Activated CD8-positive, alpha-beta T cell treated with anti-CD3 and anti-CD28 coated beads, Interleukin-2, amount 10 ng/mL, durations not matched to agents 7 days and 5 days (primary cell): ENCODE measurements at regions of chr9 and their contacts with region 1.

Region 1: GRCh38 chr9:7053903-7054302 is 296.1 kb downstream of the KDM4C start:
- DNase-seq: no peak
- ATAC-seq: no peak
- H3K4me3 Mint-ChIP-seq: no peak overlapping the region
- H3K27ac Mint-ChIP-seq: no peak overlapping the region
- H3K4me1 Mint-ChIP-seq: peaks cover 2% of the 10 kb centered on the region
- H3K27me3 Mint-ChIP-seq: no peaks in the 10 kb centered on the region

Region 2: DNA sequence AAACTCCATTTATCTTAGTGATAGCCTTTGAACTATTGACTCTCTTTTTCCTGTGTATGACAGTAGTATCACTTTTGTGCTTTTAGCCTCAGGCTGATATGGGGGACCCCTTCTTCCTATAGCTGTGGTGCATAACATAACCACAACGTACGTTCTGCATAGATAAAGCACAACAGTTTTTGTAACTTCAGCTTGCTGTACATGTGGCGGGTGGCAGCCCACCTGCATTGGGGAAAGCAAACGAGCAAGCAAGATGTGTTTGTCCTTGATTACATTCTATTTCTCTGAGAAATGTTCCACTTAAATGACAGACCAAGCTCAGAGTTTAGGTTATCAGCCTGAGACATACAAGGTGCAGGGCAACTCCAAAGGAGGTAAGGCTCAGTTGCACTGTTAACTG is 13.3 kb after region 1 on chr9:
- CTCF ChIA-PET with region 1: no interaction called
- POLR2A ChIA-PET with region 1: no interaction called
- DNase-seq: no peak
- ATAC-seq: no peak
- H3K4me3 Mint-ChIP-seq: no peak overlapping the region
- H3K27ac Mint-ChIP-seq: no peak overlapping the region
- H3K4me1 Mint-ChIP-seq: peaks cover 4% of the 10 kb centered on the region
- H3K27me3 Mint-ChIP-seq: no peaks in the 10 kb centered on the region

Region 3: GRCh38 chr9:7273391-7273974 is 219.6 kb after region 1 on chr9:
- CTCF ChIA-PET with region 1: no interaction called
- POLR2A ChIA-PET with region 1: no interaction called
- DNase-seq: no peak
- ATAC-seq: no peak
- H3K4me3 Mint-ChIP-seq: no peak overlapping the region
- H3K27ac Mint-ChIP-seq: no peak overlapping the region
- H3K4me1 Mint-ChIP-seq: no peaks in the 10 kb centered on the region
- H3K27me3 Mint-ChIP-seq: peaks cover 34% of the 10 kb centered on the region

Region 4: GRCh38 chr9:7536310-7536939 is 482.5 kb after region 1 on chr9:
- CTCF ChIA-PET with region 1: interaction called, 11 read pairs
- POLR2A ChIA-PET with region 1: no interaction called
- DNase-seq: peak; percentile 67
- ATAC-seq: peak; percentile 80
- H3K4me3 Mint-ChIP-seq: no peak overlapping the region
- H3K27ac Mint-ChIP-seq: no peak overlapping the region
- H3K4me1 Mint-ChIP-seq: peaks cover 27% of the 10 kb centered on the region
- H3K27me3 Mint-ChIP-seq: peaks cover 4% of the 10 kb centered on the region